K562 (cell line): ENCODE measurements at regions of chr6 and their contacts with region 1.

Region 1: DNA sequence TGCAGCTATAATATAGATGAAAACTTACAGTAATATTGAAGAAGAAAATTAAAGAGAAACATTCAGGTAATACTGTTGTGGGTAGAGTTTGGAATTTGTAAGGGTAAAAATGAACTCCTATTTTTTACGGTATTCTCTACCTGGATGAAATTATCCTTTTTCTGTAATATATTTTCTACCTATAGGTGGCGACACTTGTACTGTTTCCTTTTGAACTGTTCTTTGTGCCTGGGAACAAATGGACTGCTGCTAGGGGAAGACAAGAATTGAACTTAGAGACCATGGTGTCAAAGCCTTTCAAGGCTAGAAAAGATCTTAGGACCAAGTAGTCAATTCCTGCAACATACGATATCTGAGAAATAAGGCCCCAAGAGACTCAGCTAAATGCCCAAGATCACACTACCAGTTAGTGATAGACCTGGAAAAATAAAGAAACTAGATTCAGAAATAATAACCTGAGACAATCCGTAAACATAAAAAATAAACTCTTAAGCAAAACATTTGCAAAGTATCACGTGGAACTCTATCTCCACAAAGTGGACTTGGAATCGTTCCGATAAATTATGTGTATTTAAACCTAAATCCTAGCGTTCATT is 383.8 kb downstream of the TFAP2A start:
- DNase-seq: peak; percentile 19 to 44 (median 36)
- ATAC-seq: peak; percentile 79
- H3K4me3 ChIP-seq: no peak overlapping the region
- H3K27ac ChIP-seq: no peak overlapping the region
- H3K4me1 ChIP-seq: no peaks in the 10 kb centered on the region
- H3K27me3 ChIP-seq: no peaks in the 10 kb centered on the region
- CTCF ChIP-seq: peak; percentile 34 to 72 (median 56); a peak in 4 of 6 replicates
- EP300 ChIP-seq: no peak
- POLR2A ChIP-seq: no peak
- RAD21 ChIP-seq: peak; percentile 61 to 67

Region 2: DNA sequence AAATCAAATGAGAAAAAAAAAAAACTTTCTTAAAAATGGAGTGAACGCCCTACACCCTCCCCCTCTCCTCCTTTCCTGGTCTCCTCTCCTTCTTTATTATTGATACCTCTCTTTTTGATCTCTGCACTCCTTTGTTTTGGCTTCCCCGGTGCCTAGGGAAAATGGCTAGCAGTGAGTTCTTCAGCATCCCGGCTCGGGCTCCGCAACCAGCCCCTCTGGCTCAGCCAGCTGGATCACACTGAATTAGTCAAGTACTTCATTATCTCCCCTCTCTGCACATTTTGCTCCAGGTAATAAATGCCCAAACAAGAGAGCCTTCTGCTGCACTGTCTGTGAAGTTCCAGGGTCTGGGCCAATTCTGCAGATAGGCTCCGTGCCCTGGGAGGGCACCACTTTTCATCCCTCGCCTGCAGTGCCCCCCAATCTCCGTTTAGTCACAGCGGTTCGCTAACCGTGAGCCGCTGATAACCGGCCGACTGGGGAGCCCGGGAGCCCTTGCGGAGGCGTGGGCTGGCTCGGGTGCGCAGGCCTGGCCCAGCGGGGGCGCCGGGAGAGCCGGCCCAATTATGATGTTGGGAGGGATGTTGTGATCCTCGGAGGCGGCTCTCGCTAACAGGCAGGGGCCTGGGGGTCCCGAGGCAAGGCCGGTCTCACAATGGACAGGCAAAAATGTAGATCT is 82.0 kb after region 1 on chr6:
- CTCF ChIA-PET with region 1: no interaction called
- POLR2A ChIA-PET with region 1: no interaction called
- in situ Hi-C with region 1: no loop called
- intact Hi-C with region 1: no loop called
- DNase-seq: peak in 2 of 4 experiments; percentile 35 to 41
- ATAC-seq: peak; percentile 88
- H3K4me3 ChIP-seq: no peak overlapping the region
- H3K27ac ChIP-seq: no peak overlapping the region
- H3K4me1 ChIP-seq: peaks cover 3 to 12% of the 10 kb centered on the region in 2 experiments; a peak in 3 of 5 replicates
- H3K27me3 ChIP-seq: no peaks in the 10 kb centered on the region; a peak in 1 of 5 replicates
- CTCF ChIP-seq: no peak
- EP300 ChIP-seq: no peak
- POLR2A ChIP-seq: no peak
- RAD21 ChIP-seq: no peak

Region 3: GRCh38 chr6:10237284-10238043 is 206.4 kb after region 1 on chr6:
- CTCF ChIA-PET with region 1: no interaction called
- POLR2A ChIA-PET with region 1: no interaction called
- in situ Hi-C with region 1: no loop called
- intact Hi-C with region 1: loop called (anchors 10 kb)
- DNase-seq: peak in 1 of 4 experiments; percentile 18
- ATAC-seq: peak; percentile 68; the same call in 2 of the 3 replicates
- H3K4me3 ChIP-seq: no peak overlapping the region
- H3K27ac ChIP-seq: no peak overlapping the region
- H3K4me1 ChIP-seq: no peaks in the 10 kb centered on the region
- H3K27me3 ChIP-seq: peaks cover 0 to 4% of the 10 kb centered on the region in 2 experiments; a peak in 3 of 5 replicates
- CTCF ChIP-seq: no peak
- EP300 ChIP-seq: no peak
- POLR2A ChIP-seq: no peak
- RAD21 ChIP-seq: no peak